ENCODE measurements at regions of chr1 and their contacts with region 1.

Region 1: DNA sequence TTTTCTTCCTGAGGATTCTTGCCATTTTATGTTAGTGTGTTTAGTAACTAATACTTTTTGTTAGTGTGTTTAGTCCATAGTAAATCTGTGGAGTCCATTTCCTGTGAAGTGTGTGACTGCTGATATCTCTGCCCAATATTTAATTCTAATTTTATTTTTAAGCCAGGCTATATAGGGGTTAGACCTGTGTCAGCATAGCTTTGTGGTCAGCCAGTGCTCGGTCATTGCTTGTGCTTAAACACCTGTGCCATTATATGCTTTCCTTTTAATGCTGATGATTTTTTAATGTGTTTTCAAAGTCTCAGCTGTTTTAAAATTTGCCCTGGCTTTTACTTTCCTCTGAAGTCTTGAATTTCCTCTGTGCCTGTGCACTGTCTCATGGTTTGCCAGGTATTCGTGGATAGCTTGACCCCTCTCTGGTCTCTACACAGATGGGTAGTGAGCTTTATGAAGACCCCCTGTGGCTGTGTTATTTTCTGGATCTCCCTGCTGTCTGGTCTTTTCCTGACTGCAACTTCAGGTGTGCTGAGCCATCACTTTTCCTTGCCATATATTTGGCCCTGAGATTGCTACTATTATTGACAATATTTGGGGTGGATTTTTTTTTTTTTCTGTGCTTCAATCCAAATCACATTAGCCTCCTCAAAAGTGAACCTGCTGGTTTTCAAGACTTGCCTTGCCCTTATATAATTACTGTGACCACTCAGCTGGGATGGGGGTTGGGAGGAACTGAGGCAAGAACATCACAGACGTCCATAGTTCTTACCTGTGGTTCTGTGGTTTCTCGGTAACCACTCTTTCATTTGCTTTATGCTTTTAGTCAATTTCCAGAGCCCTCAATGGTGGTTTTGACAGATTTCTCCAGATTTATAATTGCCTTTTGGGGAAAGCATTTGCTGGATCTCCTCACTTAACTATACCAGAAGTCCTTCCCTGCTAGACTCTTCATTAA is 59.6 kb downstream of the RPS6KC1 start:
- DNase-seq: peak in 1 of 5 donors; percentile 4
- H3K4me3 ChIP-seq: no peak overlapping the region
- H3K4me3 Mint-ChIP-seq: no peak overlapping the region
- H3K27ac ChIP-seq: no peak overlapping the region
- H3K27ac Mint-ChIP-seq: peak overlapping the region in 3 of 7 donors; percentile 11 to 54 (median 38)
- H3K4me1 ChIP-seq: peaks cover 14% of the 10 kb centered on the region
- H3K4me1 Mint-ChIP-seq: peaks cover 9 to 13% (median 10%) of the 10 kb centered on the region in 4 donors
- H3K27me3 ChIP-seq: no peaks in the 10 kb centered on the region
- H3K27me3 Mint-ChIP-seq: no peaks in the 10 kb centered on the region

Region 2: GRCh38 chr1:213122514-213122929 is 11.9 kb after region 1 on chr1:
- CTCF ChIA-PET with region 1: interaction called, 17 read pairs
- POLR2A ChIA-PET with region 1: no interaction called
- intact Hi-C with region 1: no loop called
- DNase-seq: peak in 4 of 5 donors; percentile 11 to 16 (median 12)
- H3K4me3 ChIP-seq: no peak overlapping the region
- H3K4me3 Mint-ChIP-seq: no peak overlapping the region
- H3K27ac ChIP-seq: no peak overlapping the region
- H3K27ac Mint-ChIP-seq: no peak overlapping the region
- H3K4me1 ChIP-seq: no peaks in the 10 kb centered on the region
- H3K4me1 Mint-ChIP-seq: peaks cover 0 to 2% (median 0%) of the 10 kb centered on the region in 4 donors
- H3K27me3 ChIP-seq: no peaks in the 10 kb centered on the region
- H3K27me3 Mint-ChIP-seq: no peaks in the 10 kb centered on the region

Region 3: DNA sequence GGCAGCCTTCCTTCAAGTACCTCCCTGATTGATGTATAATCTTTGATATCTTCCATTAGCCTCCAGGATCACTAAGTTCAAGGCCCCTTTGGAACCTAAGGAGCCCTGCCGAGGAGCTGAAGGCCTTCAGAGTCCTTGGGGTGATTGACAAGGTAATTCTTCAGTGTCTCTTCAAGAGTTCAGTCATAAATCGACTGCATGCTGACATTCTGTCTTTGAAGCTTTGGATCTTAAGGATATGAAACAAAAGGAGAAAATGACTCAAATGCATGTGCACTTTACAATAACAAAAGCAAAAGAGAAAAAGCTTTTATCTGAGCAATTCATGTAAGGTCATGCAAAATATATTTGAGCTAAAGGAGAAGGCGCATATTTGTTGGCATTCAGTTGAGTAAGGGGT is 65.7 kb after region 1 on chr1:
- CTCF ChIA-PET with region 1: no interaction called
- POLR2A ChIA-PET with region 1: no interaction called
- intact Hi-C with region 1: no loop called
- DNase-seq: no peak
- H3K4me3 ChIP-seq: no peak overlapping the region
- H3K4me3 Mint-ChIP-seq: no peak overlapping the region
- H3K27ac ChIP-seq: no peak overlapping the region
- H3K27ac Mint-ChIP-seq: peak overlapping the region in 1 of 7 donors; percentile 21
- H3K4me1 ChIP-seq: no peaks in the 10 kb centered on the region
- H3K4me1 Mint-ChIP-seq: peaks cover 0 to 2% (median 0%) of the 10 kb centered on the region in 4 donors
- H3K27me3 ChIP-seq: no peaks in the 10 kb centered on the region
- H3K27me3 Mint-ChIP-seq: no peaks in the 10 kb centered on the region